Naive thymus-derived CD4-positive, alpha-beta T cell (primary cell): ENCODE measurements at regions of chrX and their contacts with region 1.

Region 1: GRCh38 chrX:110241816-110242215 is 76.1 kb downstream of the AMMECR1 start:
- DNase-seq: no peak
- ATAC-seq: no peak
- H3K4me3 ChIP-seq: no peak overlapping the region
- H3K4me3 Mint-ChIP-seq: no peak overlapping the region
- H3K27ac ChIP-seq: no peak overlapping the region
- H3K27ac Mint-ChIP-seq: peak overlapping the region in 2 of 9 donors; percentile 52 to 86
- H3K4me1 ChIP-seq: peaks cover 7 to 11% of the 10 kb centered on the region in 2 donors
- H3K4me1 Mint-ChIP-seq: peaks cover 8 to 57% (median 43%) of the 10 kb centered on the region in 7 donors
- H3K27me3 ChIP-seq: no peaks in the 10 kb centered on the region
- H3K27me3 Mint-ChIP-seq: no peaks in the 10 kb centered on the region

Region 2: GRCh38 chrX:110212290-110212689 is 29.5 kb before region 1 on chrX:
- CTCF ChIA-PET with region 1: no interaction called
- POLR2A ChIA-PET with region 1: no interaction called
- intact Hi-C with region 1: loop called in 1 of 2 experiments (anchors 2 kb)
- DNase-seq: no peak
- ATAC-seq: no peak
- H3K4me3 ChIP-seq: no peak overlapping the region
- H3K4me3 Mint-ChIP-seq: no peak overlapping the region
- H3K27ac ChIP-seq: no peak overlapping the region
- H3K27ac Mint-ChIP-seq: no peak overlapping the region
- H3K4me1 ChIP-seq: peaks cover 0 to 3% of the 10 kb centered on the region in 2 donors
- H3K4me1 Mint-ChIP-seq: peaks cover 3 to 17% (median 10%) of the 10 kb centered on the region in 7 donors
- H3K27me3 ChIP-seq: no peaks in the 10 kb centered on the region
- H3K27me3 Mint-ChIP-seq: no peaks in the 10 kb centered on the region

Region 3: GRCh38 chrX:110226931-110227330 is 14.9 kb before region 1 on chrX:
- CTCF ChIA-PET with region 1: interaction called, 4 read pairs
- POLR2A ChIA-PET with region 1: interaction called, 10 read pairs
- intact Hi-C with region 1: loop called in 1 of 2 experiments (anchors 1 kb)
- DNase-seq: no peak
- ATAC-seq: no peak
- H3K4me3 ChIP-seq: no peak overlapping the region
- H3K4me3 Mint-ChIP-seq: no peak overlapping the region
- H3K27ac ChIP-seq: no peak overlapping the region
- H3K27ac Mint-ChIP-seq: peak overlapping the region in 4 of 9 donors; percentile 6 to 90 (median 69)
- H3K4me1 ChIP-seq: peaks cover 6% of the 10 kb centered on the region in 2 donors
- H3K4me1 Mint-ChIP-seq: peaks cover 7 to 52% (median 33%) of the 10 kb centered on the region in 7 donors
- H3K27me3 ChIP-seq: no peaks in the 10 kb centered on the region
- H3K27me3 Mint-ChIP-seq: no peaks in the 10 kb centered on the region

Region 4: DNA sequence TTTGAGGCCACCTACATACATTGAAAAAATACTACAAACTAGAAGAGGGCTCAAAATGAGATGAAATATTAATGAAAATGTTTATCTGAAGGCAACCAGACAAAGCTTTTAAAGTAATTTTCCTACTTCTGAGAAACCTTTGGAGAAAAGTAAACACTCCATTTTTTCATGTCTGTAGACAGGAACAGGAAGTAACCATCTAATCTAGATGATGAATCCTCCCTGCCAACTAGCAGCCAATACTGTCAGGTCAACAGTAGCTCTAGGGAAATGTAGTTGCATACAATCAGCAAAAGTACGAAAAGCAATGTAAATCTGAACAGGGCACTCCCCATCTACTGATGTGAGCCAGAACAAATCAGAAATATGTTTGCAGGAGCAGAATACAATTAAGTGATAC is 27.1 kb after region 1 on chrX:
- CTCF ChIA-PET with region 1: no interaction called
- POLR2A ChIA-PET with region 1: interaction called, 3 read pairs
- intact Hi-C with region 1: loop called in 1 of 2 experiments (anchors 2 kb)
- DNase-seq: peak in 1 of 9 donors; percentile 5
- ATAC-seq: no peak
- H3K4me3 ChIP-seq: no peak overlapping the region
- H3K4me3 Mint-ChIP-seq: peak overlapping the region in 4 of 10 donors; percentile 21 to 68 (median 52)
- H3K27ac ChIP-seq: no peak overlapping the region
- H3K27ac Mint-ChIP-seq: peak overlapping the region in 7 of 9 donors; percentile 10 to 90 (median 86)
- H3K4me1 ChIP-seq: peaks cover 0 to 10% of the 10 kb centered on the region in 2 donors
- H3K4me1 Mint-ChIP-seq: peaks cover 17 to 60% (median 33%) of the 10 kb centered on the region in 7 donors
- H3K27me3 ChIP-seq: no peaks in the 10 kb centered on the region
- H3K27me3 Mint-ChIP-seq: no peaks in the 10 kb centered on the region

Region 5: DNA sequence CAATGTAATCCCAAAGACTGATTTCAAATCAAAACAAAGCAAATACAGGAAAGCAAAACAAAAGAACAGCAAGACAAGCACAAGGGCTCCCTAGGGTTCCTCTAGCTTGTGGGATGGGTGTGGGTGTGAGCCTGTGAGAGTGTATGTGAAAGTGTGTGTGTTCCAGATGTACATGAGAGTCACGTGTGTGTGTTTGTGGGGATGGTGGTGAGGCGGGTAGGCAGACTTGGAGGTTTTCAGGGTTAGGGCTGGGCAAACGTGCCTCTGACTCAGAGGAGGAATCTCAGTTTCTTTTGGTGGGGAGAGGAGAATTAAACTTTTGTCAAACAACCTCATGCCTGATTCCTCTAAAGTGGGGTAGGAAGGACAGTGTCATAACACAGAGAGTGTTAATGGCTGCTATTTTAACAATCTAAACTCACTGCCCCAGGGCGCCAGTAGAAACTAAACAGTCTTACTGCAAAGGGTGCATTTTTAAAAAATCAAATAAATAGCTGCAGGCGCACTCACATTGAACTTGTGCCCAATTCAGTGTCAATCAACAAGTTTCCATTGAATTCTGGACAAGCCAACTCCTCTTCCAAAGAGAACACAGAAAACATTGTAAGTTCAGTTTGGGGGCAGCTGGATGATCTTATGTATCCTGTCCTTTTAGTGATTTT is 502.0 kb after region 1 on chrX:
- CTCF ChIA-PET with region 1: no interaction called
- POLR2A ChIA-PET with region 1: no interaction called
- intact Hi-C with region 1: no loop called
- DNase-seq: no peak
- ATAC-seq: no peak
- H3K4me3 ChIP-seq: no peak overlapping the region
- H3K4me3 Mint-ChIP-seq: no peak overlapping the region
- H3K27ac ChIP-seq: no peak overlapping the region
- H3K27ac Mint-ChIP-seq: no peak overlapping the region
- H3K4me1 ChIP-seq: no peaks in the 10 kb centered on the region
- H3K4me1 Mint-ChIP-seq: no peaks in the 10 kb centered on the region
- H3K27me3 ChIP-seq: no peaks in the 10 kb centered on the region
- H3K27me3 Mint-ChIP-seq: peaks cover 0 to 4% (median 4%) of the 10 kb centered on the region in 5 donors